ENCODE measurements at regions of chr15 and their contacts with region 1.

Region 1: GRCh38 chr15:74382004-74382816 is 14.8 kb upstream of the CYP11A1 start:
- DNase-seq: peak; percentile 91
- ATAC-seq: peak; percentile 74
- H3K4me3 ChIP-seq: no peak overlapping the region
- H3K27ac ChIP-seq: peak overlapping the region; percentile 99
- H3K4me1 ChIP-seq: peaks cover 59% of the 10 kb centered on the region
- H3K27me3 ChIP-seq: no peaks in the 10 kb centered on the region
- CTCF ChIP-seq: peak; percentile 95

Region 2: GRCh38 chr15:74326451-74327145 is 55.6 kb before region 1 on chr15:
- CTCF ChIA-PET with region 1: no interaction called
- POLR2A ChIA-PET with region 1: no interaction called
- intact Hi-C with region 1: no loop called
- DNase-seq: no peak
- ATAC-seq: no peak
- H3K4me3 ChIP-seq: no peak overlapping the region
- H3K27ac ChIP-seq: no peak overlapping the region
- H3K4me1 ChIP-seq: no peaks in the 10 kb centered on the region
- H3K27me3 ChIP-seq: no peaks in the 10 kb centered on the region
- CTCF ChIP-seq: no peak

Region 3: GRCh38 chr15:74438721-74439316 is 56.6 kb after region 1 on chr15:
- CTCF ChIA-PET with region 1: interaction called, 5 read pairs
- POLR2A ChIA-PET with region 1: no interaction called
- intact Hi-C with region 1: loop called (anchors 1 kb)
- DNase-seq: peak; percentile 89
- ATAC-seq: peak; percentile 78
- H3K4me3 ChIP-seq: no peak overlapping the region
- H3K27ac ChIP-seq: no peak overlapping the region
- H3K4me1 ChIP-seq: peaks cover 15% of the 10 kb centered on the region
- H3K27me3 ChIP-seq: no peaks in the 10 kb centered on the region
- CTCF ChIP-seq: peak; percentile 94

Measured in PC-3 (cell line).